Activated CD4-positive, alpha-beta T cell treated with anti-CD3 and anti-CD28 coated beads, Interleukin-2, amount 10 ng/mL, durations not matched to agents 24 days and 14 days (primary cell): ENCODE measurements at regions of chr2 and their contacts with region 1.

Region 1: GRCh38 chr2:231662028-231662810 is 46.1 kb upstream of the PTMA start:
- DNase-seq: peak; percentile 100
- H3K4me3 Mint-ChIP-seq: peak overlapping the region; percentile 70
- H3K27ac Mint-ChIP-seq: peak overlapping the region; percentile 98
- H3K4me1 Mint-ChIP-seq: peaks cover 22% of the 10 kb centered on the region
- H3K27me3 Mint-ChIP-seq: no peaks in the 10 kb centered on the region

Region 2: DNA sequence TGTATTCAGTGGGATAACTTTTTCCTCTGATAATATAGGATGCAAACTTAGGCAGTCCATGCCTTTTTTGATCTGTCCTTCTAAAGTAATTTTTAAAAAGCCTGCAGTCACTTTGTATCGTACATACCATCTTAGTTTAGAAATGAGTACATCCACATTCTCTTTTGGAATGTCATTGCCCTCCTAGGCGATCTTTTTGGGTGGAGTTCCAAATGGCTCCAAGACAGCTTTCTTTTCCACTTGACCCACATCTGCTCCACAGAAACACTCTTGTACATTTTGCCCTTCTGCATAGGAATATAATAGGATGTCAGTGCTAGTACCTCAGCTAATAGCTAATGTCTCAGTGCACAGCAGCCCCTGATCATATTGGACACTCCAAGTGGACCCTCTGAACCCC is 515.6 kb before region 1 on chr2:
- intact Hi-C with region 1: no loop called
- DNase-seq: no peak
- H3K4me3 Mint-ChIP-seq: no peak overlapping the region
- H3K27ac Mint-ChIP-seq: no peak overlapping the region
- H3K4me1 Mint-ChIP-seq: no peaks in the 10 kb centered on the region
- H3K27me3 Mint-ChIP-seq: no peaks in the 10 kb centered on the region

Region 3: DNA sequence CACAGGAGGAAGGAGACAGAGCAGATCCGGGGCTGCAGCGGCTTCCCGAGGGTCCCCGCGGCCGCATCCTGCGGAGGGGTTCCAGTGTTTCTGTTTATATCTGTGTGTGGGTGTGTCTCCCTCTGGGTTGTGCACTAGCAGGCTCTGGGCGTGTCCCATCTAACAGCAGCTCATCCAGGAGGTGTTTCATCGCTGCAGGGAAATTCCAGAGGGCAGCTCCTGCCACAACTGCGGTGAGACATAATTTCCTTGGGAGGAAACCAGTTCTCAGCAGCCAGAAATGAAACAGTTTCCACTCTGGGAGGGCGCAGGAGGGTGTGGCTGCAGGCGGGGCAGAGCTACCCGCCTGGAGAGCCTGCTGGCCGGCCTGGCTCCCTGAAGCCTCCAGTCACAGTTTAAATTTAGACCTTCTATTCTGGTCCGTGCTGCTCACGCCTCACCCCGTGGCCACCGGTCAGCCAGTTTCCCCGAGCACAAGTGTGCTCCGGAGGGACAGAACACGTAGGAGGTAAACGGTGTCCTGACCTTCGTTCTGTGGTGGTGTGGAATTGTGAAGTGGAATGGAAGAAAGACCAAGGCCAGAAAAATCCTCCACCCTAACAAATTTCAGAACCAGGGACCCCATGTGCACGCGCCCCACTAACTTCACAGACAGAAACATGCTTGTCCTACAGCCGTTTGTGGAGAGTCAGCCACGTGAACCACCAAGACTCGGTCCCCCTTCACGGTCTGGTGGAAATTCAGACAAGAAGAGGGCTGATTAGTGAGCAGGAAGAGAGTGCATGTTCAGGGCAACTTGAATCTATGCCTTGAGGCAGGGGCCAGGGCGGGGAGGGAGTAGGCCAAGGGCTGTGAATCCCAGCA is 19.4 kb before region 1 on chr2:
- intact Hi-C with region 1: loop called (anchors 1 kb)
- DNase-seq: peak; percentile 92
- H3K4me3 Mint-ChIP-seq: peak overlapping the region; percentile 77
- H3K27ac Mint-ChIP-seq: peak overlapping the region; percentile 90
- H3K4me1 Mint-ChIP-seq: peaks cover 29% of the 10 kb centered on the region
- H3K27me3 Mint-ChIP-seq: no peaks in the 10 kb centered on the region

Region 4: GRCh38 chr2:231800493-231801091 is 138.4 kb after region 1 on chr2:
- intact Hi-C with region 1: no loop called
- DNase-seq: peak; percentile 84
- H3K4me3 Mint-ChIP-seq: no peak overlapping the region
- H3K27ac Mint-ChIP-seq: no peak overlapping the region
- H3K4me1 Mint-ChIP-seq: no peaks in the 10 kb centered on the region
- H3K27me3 Mint-ChIP-seq: no peaks in the 10 kb centered on the region

Region 5: GRCh38 chr2:232487385-232488096 is 825.3 kb after region 1 on chr2 and contains the start of gene ECEL1:
- intact Hi-C with region 1: no loop called
- DNase-seq: no peak
- H3K4me3 Mint-ChIP-seq: no peak within 1 kb of the TSS
- H3K27ac Mint-ChIP-seq: no peak within 1 kb of the TSS
- H3K4me1 Mint-ChIP-seq: peaks cover 4% of the 10 kb centered on the region
- H3K27me3 Mint-ChIP-seq: peaks cover 39% of the 10 kb centered on the region
- total RNA-seq, gene ECEL1: 0.19 TPM in 1 of 2 replicates, not detected in the other